ENCODE measurements at regions of chr2 and their contacts with region 1.

Region 1: DNA sequence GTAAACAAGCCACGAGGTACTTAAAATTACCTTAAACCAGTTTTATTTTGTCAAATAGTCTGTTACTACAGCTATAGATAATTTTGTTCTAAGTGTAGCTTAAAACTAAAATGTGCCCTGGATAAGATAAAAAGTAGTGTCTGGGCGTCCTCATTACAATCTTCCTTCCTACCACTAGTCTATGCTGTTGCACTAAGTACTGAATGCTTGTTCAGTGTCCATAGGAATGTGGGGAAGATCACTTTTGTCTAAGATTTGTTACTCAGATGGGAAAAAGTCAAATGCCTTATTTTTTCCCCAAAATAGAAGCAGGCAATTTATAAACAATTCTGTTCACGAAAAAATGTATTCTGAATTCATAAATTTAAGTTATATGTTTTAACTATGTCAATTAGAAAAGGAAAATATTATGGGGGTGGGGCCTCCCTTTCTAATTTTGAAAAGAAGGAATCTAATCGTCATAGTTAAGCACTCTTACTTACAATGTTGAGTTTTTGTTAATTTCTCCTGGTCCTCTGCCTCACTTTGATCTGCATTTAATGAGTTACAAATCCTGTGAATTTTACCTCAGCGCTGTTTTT is 140.4 kb upstream of the VRK2 start:
- DNase-seq: no peak
- H3K4me3 Mint-ChIP-seq: no peak overlapping the region
- H3K27ac Mint-ChIP-seq: no peak overlapping the region
- H3K4me1 Mint-ChIP-seq: peaks cover 9% of the 10 kb centered on the region
- H3K27me3 Mint-ChIP-seq: peaks cover 2% of the 10 kb centered on the region

Region 2: DNA sequence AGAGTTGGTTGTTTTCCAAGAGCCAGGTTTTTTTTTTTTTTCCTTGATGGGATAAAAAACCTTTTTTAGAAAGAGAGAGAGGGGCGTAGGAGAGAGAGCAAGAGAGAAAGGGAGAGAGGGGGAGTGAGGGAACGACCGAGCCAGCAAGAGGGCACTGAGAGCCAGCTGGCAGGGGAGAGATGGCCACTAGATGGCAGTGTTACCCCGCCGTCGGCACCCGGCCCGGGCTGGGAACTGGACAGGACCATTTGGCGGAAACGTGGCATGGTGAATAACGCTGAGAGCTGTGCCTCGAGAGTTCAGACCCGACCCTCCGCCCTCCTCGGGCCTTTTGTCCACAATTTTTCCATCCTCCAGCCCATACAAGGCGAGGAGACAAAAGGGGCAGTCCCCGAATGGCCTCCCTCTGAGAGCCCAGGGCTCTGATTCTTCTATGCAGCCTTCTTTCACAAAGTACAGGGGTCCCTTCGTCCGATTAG is 146.4 kb before region 1 on chr2:
- CTCF ChIA-PET with region 1: interaction called, 6 read pairs
- intact Hi-C with region 1: loop called (anchors 5 kb)
- DNase-seq: peak; percentile 79
- H3K4me3 Mint-ChIP-seq: no peak overlapping the region
- H3K27ac Mint-ChIP-seq: no peak overlapping the region
- H3K4me1 Mint-ChIP-seq: peaks cover 3% of the 10 kb centered on the region
- H3K27me3 Mint-ChIP-seq: peaks cover 2% of the 10 kb centered on the region

Region 3: DNA sequence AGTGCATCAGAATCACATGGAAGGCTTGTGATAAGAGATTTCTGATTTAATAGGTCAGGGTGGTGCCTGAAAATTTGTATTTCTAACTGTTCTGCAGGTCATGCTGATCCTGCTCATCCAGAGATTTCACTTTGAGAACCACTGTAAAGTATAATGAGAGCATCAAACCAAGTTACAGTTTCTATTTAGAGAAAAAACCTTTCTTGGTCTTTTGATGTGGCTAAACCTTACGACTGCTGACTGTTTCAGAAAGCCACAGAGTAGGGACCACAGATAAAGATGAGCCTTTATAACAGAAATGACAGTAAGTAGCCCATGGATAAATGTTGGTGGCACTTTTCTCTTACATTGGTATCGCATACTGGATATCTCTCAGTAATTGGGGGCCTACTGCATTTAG is 444.2 kb after region 1 on chr2:
- CTCF ChIA-PET with region 1: no interaction called
- intact Hi-C with region 1: loop called (anchors 10 kb)
- DNase-seq: no peak
- H3K4me3 Mint-ChIP-seq: no peak overlapping the region
- H3K27ac Mint-ChIP-seq: no peak overlapping the region
- H3K4me1 Mint-ChIP-seq: no peaks in the 10 kb centered on the region
- H3K27me3 Mint-ChIP-seq: peaks cover 21% of the 10 kb centered on the region

Region 4: DNA sequence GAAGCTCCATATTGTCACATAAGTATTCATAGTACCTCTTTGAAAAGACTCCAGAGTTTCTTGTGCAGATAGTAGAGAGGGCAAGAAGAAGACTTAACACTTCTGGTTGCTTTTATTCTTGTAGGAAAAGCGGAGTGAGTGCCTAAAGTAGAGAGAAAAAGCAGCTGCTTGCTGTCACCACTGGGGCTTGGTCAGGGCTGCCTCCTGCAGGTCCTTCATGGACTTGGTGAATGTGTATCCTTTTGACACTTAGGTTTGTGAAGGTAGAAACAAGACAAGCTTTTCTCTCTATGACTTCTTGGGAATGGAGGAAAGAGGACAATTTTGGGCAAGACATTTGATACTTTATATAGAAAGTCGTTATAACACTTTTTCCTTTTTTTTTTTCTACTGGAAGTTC is 647.7 kb after region 1 on chr2:
- CTCF ChIA-PET with region 1: interaction called, 4 read pairs
- intact Hi-C with region 1: loop called (anchors 5 kb)
- DNase-seq: peak; percentile 9
- H3K4me3 Mint-ChIP-seq: no peak overlapping the region
- H3K27ac Mint-ChIP-seq: no peak overlapping the region
- H3K4me1 Mint-ChIP-seq: no peaks in the 10 kb centered on the region
- H3K27me3 Mint-ChIP-seq: no peaks in the 10 kb centered on the region

Region 5: GRCh38 chr2:58667137-58667774 is 761.0 kb after region 1 on chr2:
- CTCF ChIA-PET with region 1: no interaction called
- intact Hi-C with region 1: no loop called
- DNase-seq: no peak
- H3K4me3 Mint-ChIP-seq: no peak overlapping the region
- H3K27ac Mint-ChIP-seq: no peak overlapping the region
- H3K4me1 Mint-ChIP-seq: no peaks in the 10 kb centered on the region
- H3K27me3 Mint-ChIP-seq: no peaks in the 10 kb centered on the region

Region 6: DNA sequence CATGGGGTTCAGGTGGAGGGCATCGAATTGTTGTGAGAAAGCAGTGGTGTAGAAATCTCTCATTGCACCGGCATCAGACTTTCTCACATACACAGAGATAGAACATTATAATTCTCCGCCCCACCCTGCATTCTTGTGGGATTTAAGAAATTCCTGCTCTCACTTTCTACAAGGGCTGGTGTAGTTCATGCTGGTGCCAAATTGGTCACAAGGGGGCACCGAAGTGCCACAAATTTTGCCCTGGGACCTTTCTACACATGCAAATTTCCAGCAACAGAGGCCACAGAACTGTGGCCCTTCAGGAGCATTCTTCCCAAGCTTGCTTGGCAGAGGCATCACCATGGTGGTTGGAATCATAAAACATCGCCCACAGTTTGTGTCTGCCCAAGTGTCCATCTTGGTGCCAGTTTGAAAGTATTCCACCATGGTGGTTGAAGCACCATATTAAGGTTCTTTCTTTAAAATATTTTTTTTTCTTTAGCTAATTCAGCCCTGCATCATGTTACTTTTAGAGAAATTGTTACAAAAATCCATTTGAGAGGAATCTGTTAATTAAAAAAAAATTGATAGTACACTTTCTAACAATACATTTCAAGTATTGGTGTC is 856.0 kb after region 1 on chr2:
- CTCF ChIA-PET with region 1: no interaction called
- intact Hi-C with region 1: loop called (anchors 10 kb)
- DNase-seq: peak; percentile 43
- H3K4me3 Mint-ChIP-seq: no peak overlapping the region
- H3K27ac Mint-ChIP-seq: no peak overlapping the region
- H3K4me1 Mint-ChIP-seq: no peaks in the 10 kb centered on the region
- H3K27me3 Mint-ChIP-seq: no peaks in the 10 kb centered on the region